SK-N-SH (cell line): ENCODE measurements at regions of chr17 and their contacts with region 1.

Region 1: DNA sequence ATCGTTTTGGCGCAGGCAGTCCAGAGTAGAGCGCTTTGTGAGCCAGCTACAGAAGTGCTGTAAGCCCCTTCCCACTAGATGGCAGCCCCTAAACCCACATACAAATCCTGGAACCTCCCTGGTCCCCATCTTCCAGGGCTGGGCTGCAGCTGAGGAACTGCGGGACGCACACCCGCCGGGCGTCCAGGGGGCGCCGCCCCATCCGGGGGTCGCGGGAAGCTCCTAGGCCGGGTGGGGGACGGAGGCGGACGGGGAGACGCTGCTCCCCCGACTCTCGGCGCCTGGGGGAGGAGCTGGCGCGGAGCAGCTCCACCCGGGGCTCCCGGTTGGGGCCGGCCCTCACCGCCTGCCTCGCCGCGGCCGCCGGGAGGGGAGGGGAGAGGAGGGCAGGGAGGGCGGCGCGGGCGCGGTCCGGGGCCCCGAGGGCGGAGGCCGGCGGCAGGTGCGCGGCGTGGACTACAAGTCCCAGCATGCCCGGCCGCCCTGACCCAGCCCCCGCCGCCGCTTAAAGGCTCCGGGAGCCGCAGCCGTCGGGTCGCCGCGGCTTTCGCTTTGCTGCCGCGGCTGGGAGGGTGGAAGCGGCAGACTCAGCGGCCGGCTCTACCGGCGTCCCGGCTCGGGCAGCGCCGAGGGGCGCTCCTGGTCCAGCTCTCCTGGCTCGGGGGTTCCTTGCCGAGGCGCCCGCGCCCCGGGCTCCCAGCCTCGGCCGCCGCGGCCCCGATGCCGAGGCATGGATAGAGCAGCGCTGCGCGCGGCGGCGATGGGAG is at the start of gene KSR1:
- DNase-seq: peak; percentile 93
- H3K4me3 ChIP-seq: peak within 1 kb of the TSS; percentile 73 to 80
- H3K27ac ChIP-seq: peak within 1 kb of the TSS in 1 of 2 experiments; percentile 63; a peak in 1 of 4 replicates
- H3K4me1 ChIP-seq: peaks cover 8 to 41% of the 10 kb centered on the region in 2 experiments
- H3K27me3 ChIP-seq: no peaks in the 10 kb centered on the region
- CTCF ChIP-seq: peak; percentile 58
- EP300 ChIP-seq: no peak
- RAD21 ChIP-seq: peak; percentile 71
- polyA plus RNA-seq, gene KSR1: 7.5 and 7.9 TPM in 2 replicates

Region 2: DNA sequence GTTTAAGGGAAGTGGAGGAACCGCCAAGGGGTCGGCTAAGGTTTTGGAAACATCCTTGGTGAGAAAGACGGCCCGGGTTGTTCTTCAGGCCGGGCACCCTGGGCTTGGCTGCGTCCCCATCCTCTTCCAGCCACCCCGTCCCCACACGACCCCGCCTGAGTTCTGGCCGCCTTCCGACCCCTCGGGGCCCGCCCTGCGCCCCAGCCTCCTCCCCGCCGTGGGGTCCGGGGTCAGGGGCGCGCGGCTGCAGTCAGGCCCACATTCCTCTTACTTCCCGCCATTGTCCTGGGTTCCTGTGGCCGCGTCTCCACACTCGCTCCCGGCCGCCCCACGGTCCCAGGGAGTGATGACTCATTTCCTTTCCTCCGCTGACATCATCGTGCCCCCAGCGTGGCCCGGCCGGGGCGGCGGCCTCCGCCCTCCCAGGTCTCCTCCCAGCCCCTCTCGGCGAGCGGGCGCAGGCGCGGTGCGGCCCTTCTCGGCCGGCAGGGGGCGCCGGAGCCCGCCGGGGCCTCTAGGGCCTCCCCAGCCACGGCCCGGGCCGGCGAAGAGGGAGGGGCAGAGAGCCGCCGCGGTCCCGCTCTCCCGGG is 102.5 kb before region 1 on chr17:
- CTCF ChIA-PET with region 1: interaction called, 10 read pairs
- POLR2A ChIA-PET with region 1: interaction called, 5 read pairs
- DNase-seq: peak; percentile 99
- H3K4me3 ChIP-seq: peak overlapping the region; percentile 65 to 82
- H3K27ac ChIP-seq: peak overlapping the region; percentile 83 to 88
- H3K4me1 ChIP-seq: peaks cover 0 to 11% of the 10 kb centered on the region in 2 experiments; a peak in 1 of 4 replicates
- H3K27me3 ChIP-seq: no peaks in the 10 kb centered on the region
- CTCF ChIP-seq: peak; percentile 78
- EP300 ChIP-seq: peak in 1 of 2 experiments; percentile 74; a peak in 1 of 4 replicates
- RAD21 ChIP-seq: peak; percentile 77

Region 3: GRCh38 chr17:27559506-27560481 is 103.7 kb after region 1 on chr17:
- CTCF ChIA-PET with region 1: interaction called, 13 read pairs
- POLR2A ChIA-PET with region 1: no interaction called
- DNase-seq: peak; percentile 58
- H3K4me3 ChIP-seq: 0 out of 4 replicates have a peak overlapping the region, but pooled peaks of 1 of the 2 experiments have one; percentile 1
- H3K27ac ChIP-seq: peak overlapping the region; percentile 56 to 72
- H3K4me1 ChIP-seq: peaks cover 24 to 28% of the 10 kb centered on the region in 2 experiments
- H3K27me3 ChIP-seq: no peaks in the 10 kb centered on the region
- CTCF ChIP-seq: no peak
- EP300 ChIP-seq: peak in 1 of 2 experiments; percentile 45; a peak in 1 of 4 replicates
- RAD21 ChIP-seq: no peak

Region 4: GRCh38 chr17:27586203-27586721 is 130.2 kb after region 1 on chr17:
- CTCF ChIA-PET with region 1: interaction called, 19 read pairs
- POLR2A ChIA-PET with region 1: interaction called, 3 read pairs
- DNase-seq: peak; percentile 76
- H3K4me3 ChIP-seq: 0 out of 4 replicates have a peak overlapping the region, but pooled peaks of 1 of the 2 experiments have one; percentile 12
- H3K27ac ChIP-seq: peak overlapping the region; percentile 74 to 97
- H3K4me1 ChIP-seq: peaks cover 17 to 40% of the 10 kb centered on the region in 2 experiments
- H3K27me3 ChIP-seq: no peaks in the 10 kb centered on the region
- CTCF ChIP-seq: no peak
- EP300 ChIP-seq: peak in 1 of 2 experiments; percentile 66; a peak in 1 of 4 replicates
- RAD21 ChIP-seq: no peak